ENCODE measurements at regions of chr17 and their contacts with region 1.

Region 1: DNA sequence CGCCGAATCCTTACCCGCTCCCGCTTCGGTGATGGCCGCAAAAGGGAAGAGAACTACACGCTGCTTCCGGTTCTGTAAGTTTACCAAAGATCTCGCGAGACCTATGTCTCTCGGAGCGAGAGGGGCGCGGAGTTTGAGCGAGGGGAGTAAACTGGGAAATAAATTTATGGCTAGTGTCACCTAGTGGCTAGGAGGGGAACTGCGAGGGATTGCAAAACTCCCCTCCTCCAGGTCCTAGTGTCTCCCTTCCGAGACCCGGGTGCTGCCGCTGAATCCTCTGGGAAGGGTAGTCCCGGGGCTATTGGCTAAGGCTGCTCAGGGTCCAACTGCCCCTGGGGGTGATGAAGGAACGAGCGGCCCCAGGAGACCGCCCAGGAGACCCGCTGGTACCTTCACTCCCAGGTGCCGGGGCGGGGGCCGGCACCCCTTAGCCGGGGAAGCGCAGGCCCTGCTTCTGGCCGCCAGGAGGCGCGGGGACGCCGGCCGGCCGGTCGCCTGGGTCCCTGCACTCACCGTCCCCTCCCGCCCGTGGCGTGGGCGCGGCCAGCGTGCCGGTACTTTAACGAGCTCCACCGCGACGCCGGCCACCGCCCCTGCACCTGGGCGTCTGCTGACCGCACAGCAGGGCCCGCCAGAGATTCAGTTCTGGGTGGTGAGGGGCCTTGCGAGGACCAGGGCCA is at the start of gene RPL26:
- DNase-seq: peak; percentile 96 to 99 (median 97)
- H3K4me3 ChIP-seq: peak within 1 kb of the TSS; percentile 72 to 89 (median 74)
- H3K4me3 Mint-ChIP-seq: peak within 1 kb of the TSS; percentile 95 to 98
- H3K27ac ChIP-seq: peak within 1 kb of the TSS; percentile 60 to 79
- H3K27ac Mint-ChIP-seq: peak within 1 kb of the TSS; percentile 89 to 95 (median 93)
- H3K4me1 ChIP-seq: peaks cover 28 to 34% of the 10 kb centered on the region in 2 donors
- H3K4me1 Mint-ChIP-seq: peaks cover 34% of the 10 kb centered on the region
- H3K27me3 ChIP-seq: no peaks in the 10 kb centered on the region
- H3K27me3 Mint-ChIP-seq: no peaks in the 10 kb centered on the region
- CTCF ChIP-seq: peak; percentile 100
- polyA plus RNA-seq, gene RPL26: 859 to 4,469 (median 884) TPM

Region 2: GRCh38 chr17:8435245-8436168 is 52.2 kb after region 1 on chr17 and contains the start of gene NDEL1:
- intact Hi-C with region 1: loop called in 1 of 2 experiments (anchors 5 kb)
- DNase-seq: peak; percentile 94 to 99 (median 98)
- H3K4me3 ChIP-seq: peak within 1 kb of the TSS; percentile 63 to 94 (median 92)
- H3K4me3 Mint-ChIP-seq: peak within 1 kb of the TSS; percentile 93 to 97
- H3K27ac ChIP-seq: peak within 1 kb of the TSS; percentile 91 to 96
- H3K27ac Mint-ChIP-seq: peak within 1 kb of the TSS; percentile 97 to 99 (median 98)
- H3K4me1 ChIP-seq: peaks cover 12 to 17% of the 10 kb centered on the region in 2 donors
- H3K4me1 Mint-ChIP-seq: peaks cover 24% of the 10 kb centered on the region
- H3K27me3 ChIP-seq: no peaks in the 10 kb centered on the region
- H3K27me3 Mint-ChIP-seq: peaks cover 0 to 4% (median 0%) of the 10 kb centered on the region in 3 donors
- CTCF ChIP-seq: no peak
- polyA plus RNA-seq, gene NDEL1: 29.8 to 58.3 (median 39.7) TPM

Region 3: DNA sequence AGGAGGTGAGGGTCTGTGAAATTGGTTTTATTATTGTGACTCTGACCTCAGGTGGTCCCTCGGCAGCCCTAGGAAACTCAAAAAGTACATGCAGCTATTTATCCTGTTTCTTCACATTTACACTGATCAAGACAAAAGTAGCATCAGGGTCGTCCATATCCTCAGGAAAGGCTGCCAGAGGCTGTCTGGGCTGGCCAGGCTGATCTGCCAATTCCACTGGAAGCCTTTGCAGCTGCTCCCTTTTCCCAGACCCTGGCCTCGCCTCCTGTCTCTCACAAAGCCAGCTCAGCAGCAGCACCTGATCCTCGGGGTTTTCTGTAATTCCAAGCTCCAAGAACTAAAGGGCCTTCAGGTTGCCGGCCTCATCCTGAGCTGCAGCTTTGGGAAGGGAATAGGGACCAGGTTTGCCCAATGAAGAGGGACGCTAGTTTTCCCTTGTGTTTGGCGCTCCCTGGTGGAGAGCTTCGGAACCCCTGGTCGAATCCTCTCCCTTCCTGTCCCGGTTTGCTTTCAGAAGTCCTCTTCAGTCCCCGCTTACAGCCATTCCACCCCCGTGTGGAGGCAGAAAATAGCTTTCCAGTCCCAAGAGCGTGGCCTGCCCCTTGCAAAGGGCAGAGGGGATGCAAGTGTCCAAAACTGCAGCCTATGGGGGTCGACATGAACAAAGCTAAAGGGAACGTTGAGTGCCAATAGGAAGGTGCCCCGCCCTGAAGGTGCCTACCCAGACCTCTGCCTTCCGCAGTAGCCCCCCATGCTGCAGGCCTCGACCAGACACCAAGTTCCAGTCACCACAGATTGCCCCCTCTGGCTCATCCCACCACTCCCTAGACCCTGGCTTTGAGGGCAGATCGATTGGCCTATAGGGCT is 402.5 kb after region 1 on chr17:
- intact Hi-C with region 1: loop called in 1 of 2 experiments (anchors 10 kb)
- DNase-seq: peak; percentile 42 to 72 (median 64)
- H3K4me3 ChIP-seq: no peak overlapping the region
- H3K4me3 Mint-ChIP-seq: peak overlapping the region in 1 of 2 donors; percentile 51
- H3K27ac ChIP-seq: no peak overlapping the region
- H3K27ac Mint-ChIP-seq: no peak overlapping the region
- H3K4me1 ChIP-seq: peaks cover 19 to 28% of the 10 kb centered on the region in 2 donors
- H3K4me1 Mint-ChIP-seq: peaks cover 27% of the 10 kb centered on the region
- H3K27me3 ChIP-seq: no peaks in the 10 kb centered on the region
- H3K27me3 Mint-ChIP-seq: no peaks in the 10 kb centered on the region
- CTCF ChIP-seq: peak; percentile 93

Measured in CD14-positive monocyte (primary cell).